ENCODE measurements at regions of chr17 and their contacts with region 1.

Region 1: GRCh38 chr17:19448341-19449268 is 37.6 kb downstream of the RNF112 start:
- DNase-seq: no peak
- H3K4me3 ChIP-seq: no peak overlapping the region
- H3K27ac ChIP-seq: peak overlapping the region; percentile 59
- H3K4me1 ChIP-seq: no peaks in the 10 kb centered on the region
- H3K27me3 ChIP-seq: no peaks in the 10 kb centered on the region
- CTCF ChIP-seq: no peak

Region 2: DNA sequence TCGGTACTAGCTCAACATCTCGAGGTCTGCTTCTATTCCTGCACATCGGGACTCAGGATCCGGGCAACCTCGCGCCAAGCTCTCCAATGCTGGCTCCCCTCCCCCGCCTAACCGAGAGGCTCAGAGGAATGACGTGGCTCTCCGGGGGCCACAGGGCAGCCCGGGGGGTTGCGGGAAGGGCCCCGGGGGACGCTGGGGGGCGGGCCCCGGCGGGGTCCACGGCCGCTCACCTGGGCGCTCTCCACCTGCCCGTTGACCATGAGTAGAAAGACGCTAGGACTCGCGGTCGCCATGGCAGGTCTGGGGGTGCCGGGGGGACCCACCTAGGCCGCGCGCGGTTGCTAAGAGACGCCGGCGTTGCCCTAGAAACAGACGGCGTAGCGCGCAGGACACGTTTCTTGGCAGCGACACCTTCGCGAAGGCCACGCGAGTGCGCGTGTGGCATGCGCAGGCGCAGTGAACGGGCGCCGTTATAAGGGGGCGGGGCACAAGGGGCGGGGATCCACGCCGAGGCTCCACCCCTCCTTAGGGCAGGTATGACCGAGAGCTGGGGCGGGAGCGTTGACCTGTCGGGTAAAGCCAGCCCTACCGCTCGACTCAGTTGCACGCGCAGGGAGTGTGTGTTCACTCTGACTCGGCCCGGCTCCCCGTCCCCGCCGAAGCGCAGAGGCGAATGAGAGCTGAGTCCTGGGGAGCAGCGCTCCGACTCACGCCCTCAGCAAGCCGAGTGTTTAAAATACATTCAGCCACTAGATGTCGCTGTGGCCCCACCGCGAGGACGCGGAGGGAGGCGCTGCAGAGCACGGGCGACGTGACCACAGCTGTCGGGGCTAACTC is 86.1 kb before region 1 on chr17 and contains the start of gene B9D1:
- intact Hi-C with region 1: loop called (anchors 1 kb)
- DNase-seq: peak; percentile 95
- H3K4me3 ChIP-seq: peak within 1 kb of the TSS; percentile 58
- H3K27ac ChIP-seq: peak within 1 kb of the TSS; percentile 66
- H3K4me1 ChIP-seq: no peaks in the 10 kb centered on the region
- H3K27me3 ChIP-seq: no peaks in the 10 kb centered on the region
- CTCF ChIP-seq: peak; percentile 87
- total RNA-seq, gene B9D1: 5.6 to 11.9 TPM

Region 3: GRCh38 chr17:19398301-19399181 is 50.1 kb before region 1 on chr17:
- intact Hi-C with region 1: loop called (anchors 2 kb)
- DNase-seq: peak; percentile 94
- H3K4me3 ChIP-seq: no peak overlapping the region
- H3K27ac ChIP-seq: peak overlapping the region; percentile 74
- H3K4me1 ChIP-seq: peaks cover 20% of the 10 kb centered on the region
- H3K27me3 ChIP-seq: no peaks in the 10 kb centered on the region
- CTCF ChIP-seq: no peak

Region 4: GRCh38 chr17:20155258-20156195 is 706.9 kb after region 1 on chr17:
- intact Hi-C with region 1: no loop called
- DNase-seq: peak; percentile 99
- H3K4me3 ChIP-seq: peak overlapping the region; percentile 74
- H3K27ac ChIP-seq: peak overlapping the region; percentile 86
- H3K4me1 ChIP-seq: no peaks in the 10 kb centered on the region
- H3K27me3 ChIP-seq: no peaks in the 10 kb centered on the region
- CTCF ChIP-seq: no peak